ENCODE measurements at regions of chr1 and their contacts with region 1.

Region 1: DNA sequence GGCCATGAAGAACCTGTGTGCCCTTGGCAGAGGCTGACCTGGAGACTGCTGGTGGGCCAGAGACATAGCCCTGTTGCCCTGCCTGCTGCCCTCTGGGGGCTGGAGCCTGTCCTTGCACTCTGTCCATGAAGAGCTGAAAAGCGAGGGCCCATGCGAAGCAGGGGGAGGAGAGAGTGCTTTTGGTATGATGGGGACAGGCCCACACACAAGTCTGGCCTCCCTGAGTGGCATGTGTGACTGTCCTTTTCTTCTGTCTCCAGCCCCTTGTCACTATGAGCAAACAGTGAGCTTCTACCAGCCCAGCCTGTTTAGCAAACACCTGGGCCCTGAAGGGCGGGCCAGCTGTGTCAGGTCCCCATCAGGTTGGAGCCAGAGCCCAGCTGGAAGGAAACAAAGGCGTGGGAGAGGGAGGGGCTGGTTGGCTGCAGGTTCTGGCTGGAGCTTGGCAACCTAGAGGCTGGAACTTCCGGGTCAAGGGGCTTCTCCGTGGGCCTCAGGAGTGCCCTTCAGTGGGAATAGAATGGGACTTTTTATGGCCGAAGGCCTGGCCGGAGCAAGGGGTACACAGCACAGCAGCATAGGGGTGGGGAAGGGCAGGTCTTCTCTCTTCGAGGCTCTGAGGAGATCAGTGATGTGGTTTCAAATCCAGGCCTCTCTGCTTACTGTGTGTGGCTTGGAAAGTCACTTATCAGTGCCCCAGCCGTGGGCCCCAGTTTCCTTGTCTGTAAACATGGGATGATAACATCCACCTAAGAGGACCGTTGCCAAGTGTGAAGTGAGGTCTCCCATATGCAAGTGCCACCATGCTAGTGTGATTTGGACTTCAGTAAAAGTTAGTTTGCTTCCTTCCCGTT is 14.3 kb downstream of the QSOX1 start:
- DNase-seq: peak in 1 of 2 donors; percentile 78
- ATAC-seq: peak; percentile 16 to 24
- H3K4me3 ChIP-seq: no peak overlapping the region
- H3K27ac ChIP-seq: peak overlapping the region; percentile 89 to 97 (median 96)
- H3K4me1 ChIP-seq: peaks cover 54 to 60% of the 10 kb centered on the region in 2 donors
- H3K27me3 ChIP-seq: no peaks in the 10 kb centered on the region
- CTCF ChIP-seq: peak; percentile 44 to 61 (median 49)
- POLR2A ChIP-seq: no peak

Region 2: GRCh38 chr1:179954493-179955297 is 214.3 kb before region 1 on chr1 and contains the start of gene CEP350:
- in situ Hi-C with region 1: no loop called
- intact Hi-C with region 1: loop called (anchors 5 kb)
- DNase-seq: peak; percentile 97 to 98
- ATAC-seq: peak; percentile 93 to 94
- H3K4me3 ChIP-seq: peak within 1 kb of the TSS; percentile 75 to 97 (median 92)
- H3K27ac ChIP-seq: peak within 1 kb of the TSS; percentile 93 to 98 (median 97)
- H3K4me1 ChIP-seq: peaks cover 17 to 38% of the 10 kb centered on the region in 2 donors
- H3K27me3 ChIP-seq: no peaks in the 10 kb centered on the region
- CTCF ChIP-seq: peak in 2 of 5 experiments; percentile 13 to 19
- POLR2A ChIP-seq: peak; percentile 87 to 92
- total RNA-seq, gene CEP350: 83.7 to 197 (median 157) TPM

Region 3: DNA sequence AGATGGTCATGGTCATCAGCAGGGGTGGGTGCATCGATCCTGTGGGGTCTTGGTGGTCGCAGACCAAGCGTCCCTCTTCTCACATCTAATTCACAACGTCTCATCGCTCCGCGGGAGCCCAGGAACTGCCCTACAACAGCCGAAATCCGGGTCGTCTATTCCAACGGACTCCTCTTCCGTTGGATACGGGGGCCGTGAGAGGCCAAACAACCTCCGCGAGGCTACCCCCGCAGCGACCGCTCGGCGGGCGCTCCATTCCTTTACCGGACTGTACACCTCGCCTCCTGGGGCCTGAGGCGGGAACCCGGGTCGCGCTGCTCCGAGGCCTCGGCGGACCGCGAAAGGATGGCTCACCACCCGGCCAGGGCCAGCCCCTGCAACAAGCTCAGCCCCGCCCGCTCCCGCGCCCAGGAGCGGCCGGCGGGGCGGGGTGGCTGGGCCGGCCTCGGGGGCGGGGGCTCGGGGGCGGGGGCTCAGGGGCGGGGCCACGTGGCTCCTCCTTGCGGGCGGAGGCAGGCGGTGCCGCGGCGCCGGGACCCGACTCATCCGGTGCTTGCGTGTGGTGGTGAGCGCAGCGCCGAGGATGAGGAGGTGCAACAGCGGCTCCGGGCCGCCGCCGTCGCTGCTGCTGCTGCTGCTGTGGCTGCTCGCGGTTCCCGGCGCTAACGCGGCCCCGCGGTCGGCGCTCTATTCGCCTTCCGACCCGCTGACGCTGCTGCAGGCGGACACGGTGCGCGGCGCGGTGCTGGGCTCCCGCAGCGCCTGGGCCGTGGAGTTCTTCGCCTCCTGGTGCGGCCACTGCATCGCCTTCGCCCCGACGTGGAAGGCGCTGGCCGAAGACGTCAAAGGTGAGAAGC is 14.5 kb before region 1 on chr1 and contains the start of gene QSOX1:
- in situ Hi-C with region 1: no loop called
- intact Hi-C with region 1: loop called (anchors 2 kb)
- DNase-seq: peak; percentile 83 to 87
- ATAC-seq: peak; percentile 86 to 89
- H3K4me3 ChIP-seq: peak within 1 kb of the TSS; percentile 69 to 100 (median 84)
- H3K27ac ChIP-seq: peak within 1 kb of the TSS; percentile 86 to 98 (median 91)
- H3K4me1 ChIP-seq: peaks cover 29 to 34% of the 10 kb centered on the region in 2 donors
- H3K27me3 ChIP-seq: no peaks in the 10 kb centered on the region
- CTCF ChIP-seq: peak in 3 of 5 experiments; percentile 18 to 64 (median 29)
- POLR2A ChIP-seq: peak; percentile 94
- total RNA-seq, gene QSOX1: 65.9 to 124 (median 93.7) TPM